ENCODE measurements at regions of chr17 and their contacts with region 1.

Region 1: GRCh38 chr17:75673487-75673886 is 6.3 kb downstream of the SAP30BP start:
- DNase-seq: no peak
- H3K4me3 ChIP-seq: no peak overlapping the region
- CTCF ChIP-seq: no peak
- POLR2A ChIP-seq: no peak

Region 2: DNA sequence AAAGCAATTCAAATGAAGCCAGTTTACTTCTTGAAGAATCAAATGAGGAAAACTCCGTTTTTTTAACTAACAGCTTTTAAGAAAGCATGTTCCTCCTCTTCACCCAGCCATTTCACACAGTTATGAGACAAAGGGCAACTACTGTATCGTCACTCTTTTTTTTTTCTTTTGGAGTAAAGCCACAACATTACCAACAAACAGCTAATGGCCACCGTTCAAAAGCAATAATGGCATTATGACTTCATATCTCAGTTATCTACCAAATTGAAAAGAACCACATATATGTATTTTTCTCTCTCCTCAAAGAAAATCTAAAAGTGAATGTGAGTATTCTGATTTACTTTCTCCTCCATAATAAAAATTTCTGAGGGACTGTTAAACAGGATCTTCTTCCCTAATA is 282.5 kb before region 1 on chr17:
- intact Hi-C with region 1: no loop called
- DNase-seq: no peak
- H3K4me3 ChIP-seq: no peak overlapping the region
- CTCF ChIP-seq: no peak
- POLR2A ChIP-seq: no peak

Region 3: GRCh38 chr17:75749545-75750389 is 76.3 kb after region 1 on chr17:
- intact Hi-C with region 1: loop called (anchors 5 kb)
- DNase-seq: peak; percentile 77 to 97
- H3K4me3 ChIP-seq: no peak overlapping the region
- CTCF ChIP-seq: peak in 1 of 3 donors; percentile 82
- POLR2A ChIP-seq: no peak

Measured in lower leg skin (tissue), 4 donors.